Activated CD4-positive, alpha-beta T cell treated with anti-CD3 and anti-CD28 coated beads, Interleukin-2, amount 10 ng/mL, durations not matched to agents 24 days and 14 days (primary cell): ENCODE measurements at regions of chr18 and their contacts with region 1.

Region 1: DNA sequence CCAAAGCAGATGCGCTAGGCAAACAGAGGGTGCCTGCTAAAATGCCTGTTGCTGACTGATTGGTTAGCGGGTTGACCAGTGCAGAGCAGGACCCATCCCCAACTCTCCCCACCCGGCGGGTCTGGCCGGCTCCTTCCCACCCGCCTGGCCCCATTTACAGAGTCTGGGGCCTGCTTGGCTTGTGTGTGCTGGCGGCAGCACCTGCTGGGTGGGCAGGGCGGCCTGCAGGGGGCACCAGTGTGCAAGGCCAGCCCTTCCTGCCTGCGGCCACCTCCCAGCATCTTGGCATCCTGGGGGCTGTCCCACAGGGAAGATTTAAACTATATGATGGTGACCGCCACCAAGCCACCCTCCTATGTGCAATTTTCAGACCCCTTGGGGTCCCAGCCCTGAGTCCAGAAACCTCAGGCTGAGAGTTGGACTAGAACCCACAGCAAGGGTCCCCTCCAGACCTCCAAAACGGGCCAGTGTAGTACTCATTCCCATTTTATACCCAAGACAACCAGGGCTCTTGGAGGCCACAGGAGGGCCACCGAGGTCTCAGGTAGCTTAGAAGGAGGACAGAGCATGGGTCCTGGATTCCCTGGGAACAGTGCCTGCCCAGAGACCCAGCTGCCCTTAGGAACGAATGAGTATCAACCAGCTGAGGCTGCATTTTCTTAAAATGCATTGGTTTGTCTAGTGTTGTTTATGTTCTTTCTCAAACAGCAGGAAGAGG is 173.6 kb downstream of the SMAD7 start:
- DNase-seq: peak; percentile 91
- H3K4me3 Mint-ChIP-seq: no peak overlapping the region
- H3K27ac Mint-ChIP-seq: no peak overlapping the region
- H3K4me1 Mint-ChIP-seq: peaks cover 6% of the 10 kb centered on the region
- H3K27me3 Mint-ChIP-seq: no peaks in the 10 kb centered on the region

Region 2: GRCh38 chr18:48675352-48675761 is 101.8 kb before region 1 on chr18:
- intact Hi-C with region 1: loop called (anchors 10 kb)
- DNase-seq: peak; percentile 95
- H3K4me3 Mint-ChIP-seq: no peak overlapping the region
- H3K27ac Mint-ChIP-seq: no peak overlapping the region
- H3K4me1 Mint-ChIP-seq: peaks cover 2% of the 10 kb centered on the region
- H3K27me3 Mint-ChIP-seq: no peaks in the 10 kb centered on the region

Region 3: DNA sequence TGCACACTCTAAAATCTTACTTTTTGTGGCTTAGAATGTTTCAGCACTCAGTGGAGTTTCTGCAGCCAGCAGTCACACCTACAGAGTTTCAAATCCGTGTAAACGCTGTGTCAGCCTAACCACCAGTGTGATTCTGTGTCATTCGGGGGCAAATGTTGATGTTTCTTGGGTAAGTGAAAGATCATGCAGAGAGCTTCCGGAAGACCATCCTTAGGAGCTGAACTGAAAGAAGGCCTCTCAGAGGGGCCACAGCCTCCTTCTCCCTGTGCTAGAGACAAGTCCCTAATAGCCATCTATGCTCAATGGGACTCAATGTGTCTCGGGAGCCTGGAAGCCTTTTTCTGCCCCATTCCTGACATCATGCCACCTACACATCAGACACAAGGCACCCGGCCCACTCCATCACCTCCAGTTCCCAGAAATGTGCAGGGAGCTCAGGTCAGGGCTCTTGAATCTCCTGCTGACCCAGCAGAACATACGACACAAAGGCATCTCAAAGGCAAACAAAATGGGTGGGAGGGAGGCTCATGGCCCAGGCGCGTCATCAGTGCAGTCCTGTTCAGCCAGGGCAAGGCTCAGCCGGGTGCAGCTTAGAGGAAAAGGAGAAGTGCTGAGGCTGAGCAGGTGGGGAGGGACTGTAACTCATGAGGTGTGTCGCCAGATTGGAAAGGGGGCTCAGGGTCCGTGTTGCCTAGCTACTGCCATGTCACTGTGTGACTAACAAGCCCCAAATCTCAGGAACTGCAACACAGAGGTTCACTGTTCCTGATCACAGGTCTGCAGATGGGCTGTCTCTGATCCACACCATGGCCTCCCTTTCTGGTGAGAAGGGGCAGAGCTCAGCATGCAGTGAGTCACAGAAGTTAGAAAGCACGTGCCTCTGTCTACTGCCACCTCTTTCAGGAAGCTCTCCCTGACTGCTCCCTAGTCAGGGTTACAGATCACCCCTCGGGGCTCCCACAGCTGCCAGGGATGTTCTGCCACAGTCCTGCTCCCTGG is 91.6 kb after region 1 on chr18:
- intact Hi-C with region 1: loop called (anchors 2 kb)
- DNase-seq: peak; percentile 83
- H3K4me3 Mint-ChIP-seq: peak overlapping the region; percentile 73
- H3K27ac Mint-ChIP-seq: peak overlapping the region; percentile 97
- H3K4me1 Mint-ChIP-seq: peaks cover 28% of the 10 kb centered on the region
- H3K27me3 Mint-ChIP-seq: no peaks in the 10 kb centered on the region

Region 4: DNA sequence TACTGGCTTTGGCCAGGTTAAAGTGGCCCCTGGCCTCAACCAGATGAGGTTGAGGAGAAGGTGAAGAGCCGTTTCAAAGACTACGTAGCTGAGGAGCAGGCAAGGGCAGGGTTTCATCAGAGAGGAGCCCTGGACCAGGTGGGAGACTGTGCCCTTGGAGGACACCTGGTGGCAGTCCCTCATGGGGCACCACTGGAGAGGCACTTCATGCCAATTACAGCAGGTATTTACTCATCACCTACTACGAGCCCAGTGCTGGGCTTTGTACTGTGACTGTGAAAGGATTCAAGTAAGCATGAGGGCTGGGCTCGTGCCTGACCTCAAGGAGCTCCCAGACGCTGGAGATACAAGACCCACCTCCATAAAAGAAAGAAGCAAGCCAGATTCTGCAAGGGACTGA is 136.0 kb after region 1 on chr18:
- intact Hi-C with region 1: loop called (anchors 1 kb)
- DNase-seq: peak; percentile 76
- H3K4me3 Mint-ChIP-seq: no peak overlapping the region
- H3K27ac Mint-ChIP-seq: no peak overlapping the region
- H3K4me1 Mint-ChIP-seq: peaks cover 27% of the 10 kb centered on the region
- H3K27me3 Mint-ChIP-seq: no peaks in the 10 kb centered on the region

Region 5: DNA sequence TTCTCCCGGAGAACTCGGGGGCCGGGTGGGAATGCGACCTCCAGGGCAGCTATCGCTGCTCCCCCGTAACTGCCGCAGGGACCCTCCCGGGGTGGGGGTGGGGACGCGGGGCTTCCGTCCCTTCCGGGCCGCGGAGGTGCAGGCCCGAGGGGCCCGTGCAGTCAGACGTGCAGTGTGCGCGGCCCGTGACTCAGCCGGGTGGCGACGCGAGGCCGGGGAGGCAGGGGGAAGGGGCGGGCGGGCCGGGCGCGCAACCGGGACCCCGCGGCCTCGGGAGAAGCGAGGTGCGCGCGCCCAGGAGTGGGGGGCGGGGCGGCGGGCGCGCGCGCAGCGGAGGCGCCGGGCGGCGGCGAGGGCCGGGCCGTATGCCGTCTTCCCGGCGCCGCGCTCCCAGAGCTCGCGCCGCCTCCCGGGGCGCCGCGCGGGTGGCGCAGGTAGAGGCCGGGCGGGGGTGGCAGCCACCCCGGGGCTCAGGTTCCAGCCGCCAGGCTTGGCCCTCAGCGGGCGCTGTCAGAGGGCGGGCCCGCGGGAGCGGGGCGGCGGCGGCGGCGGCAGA is 198.5 kb after region 1 on chr18:
- intact Hi-C with region 1: loop called (anchors 5 kb)
- DNase-seq: peak; percentile 82
- H3K4me3 Mint-ChIP-seq: peak overlapping the region; percentile 51
- H3K27ac Mint-ChIP-seq: no peak overlapping the region
- H3K4me1 Mint-ChIP-seq: peaks cover 16% of the 10 kb centered on the region
- H3K27me3 Mint-ChIP-seq: peaks cover 51% of the 10 kb centered on the region

Region 6: DNA sequence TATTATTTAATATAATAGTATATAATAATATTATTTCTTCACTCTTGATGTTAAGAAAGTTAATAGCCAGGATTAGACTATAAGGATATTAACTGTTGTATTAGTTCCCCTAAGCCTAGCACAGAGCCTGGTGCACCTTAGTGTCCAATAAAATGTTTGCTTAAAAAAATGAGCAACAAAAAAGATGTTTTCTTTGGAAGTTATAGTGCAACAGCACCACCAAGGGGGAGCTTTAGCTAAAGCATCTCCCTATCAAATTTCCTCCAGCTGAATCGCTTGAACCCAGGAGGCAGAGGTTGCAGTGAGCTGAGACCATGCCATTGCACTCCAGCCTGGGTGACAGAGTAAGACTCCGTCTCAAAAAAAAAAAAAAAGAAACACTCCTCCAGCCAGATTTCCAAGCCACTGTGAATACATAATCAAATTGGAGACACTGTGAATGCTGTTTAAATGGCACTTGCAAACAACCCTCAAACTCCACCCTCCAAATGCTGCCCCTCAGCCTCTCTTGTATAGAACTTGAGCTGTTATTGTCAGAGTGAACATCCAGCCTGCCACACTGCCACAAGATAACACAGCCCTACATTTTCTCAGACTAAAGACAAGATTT is 461.4 kb after region 1 on chr18:
- intact Hi-C with region 1: loop called (anchors 1 kb)
- DNase-seq: peak; percentile 73
- H3K4me3 Mint-ChIP-seq: no peak overlapping the region
- H3K27ac Mint-ChIP-seq: no peak overlapping the region
- H3K4me1 Mint-ChIP-seq: peaks cover 5% of the 10 kb centered on the region
- H3K27me3 Mint-ChIP-seq: no peaks in the 10 kb centered on the region

Region 7: DNA sequence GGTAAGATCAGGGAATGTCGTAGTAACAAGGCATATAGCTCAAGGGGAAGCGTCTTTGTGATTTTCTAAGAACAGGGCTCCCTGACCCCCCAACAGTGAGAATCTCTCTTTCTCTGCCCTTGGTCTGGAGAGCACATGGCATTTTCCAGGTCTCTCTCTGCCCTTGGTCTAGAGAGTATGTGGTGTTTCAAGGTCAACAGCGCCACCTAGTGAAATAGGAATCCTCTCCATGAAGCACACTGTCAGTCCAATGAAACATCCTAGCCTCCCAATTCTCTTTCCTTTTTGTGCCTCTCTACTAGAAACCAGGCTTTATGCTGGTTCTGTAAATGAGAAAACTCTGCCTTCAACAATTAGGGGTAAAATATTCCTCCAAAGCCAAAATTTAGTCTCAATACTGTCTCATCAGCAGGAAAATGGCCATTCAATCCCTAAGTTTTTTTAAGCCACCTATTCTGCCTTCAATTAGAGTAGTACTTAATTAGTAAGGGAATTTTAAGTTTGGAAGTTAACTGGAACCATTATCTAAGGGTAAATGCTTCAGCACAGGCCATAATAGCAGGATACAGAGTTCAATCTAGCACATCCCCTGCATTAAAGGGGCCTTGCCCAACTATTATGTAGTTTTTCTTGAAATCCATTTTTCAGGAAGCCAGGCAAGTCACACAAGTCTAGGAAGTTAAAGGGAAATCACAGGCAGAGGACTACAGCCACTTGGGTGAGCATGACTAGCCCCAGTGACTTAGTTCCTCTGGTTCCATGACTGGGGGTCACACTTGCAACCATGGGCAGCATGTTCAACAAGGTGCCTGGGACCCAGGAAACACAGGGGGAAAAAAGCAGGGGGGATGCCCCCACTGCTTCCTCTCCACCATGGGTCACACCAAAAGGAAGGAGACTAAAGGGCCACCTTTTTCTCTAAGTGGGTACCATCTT is 670.9 kb after region 1 on chr18:
- intact Hi-C with region 1: loop called (anchors 10 kb)
- DNase-seq: peak; percentile 86
- H3K4me3 Mint-ChIP-seq: no peak overlapping the region
- H3K27ac Mint-ChIP-seq: no peak overlapping the region
- H3K4me1 Mint-ChIP-seq: peaks cover 14% of the 10 kb centered on the region
- H3K27me3 Mint-ChIP-seq: no peaks in the 10 kb centered on the region